Heart right ventricle (tissue), 16 donors: ENCODE measurements at regions of chr12 and their contacts with region 1.

Region 1: DNA sequence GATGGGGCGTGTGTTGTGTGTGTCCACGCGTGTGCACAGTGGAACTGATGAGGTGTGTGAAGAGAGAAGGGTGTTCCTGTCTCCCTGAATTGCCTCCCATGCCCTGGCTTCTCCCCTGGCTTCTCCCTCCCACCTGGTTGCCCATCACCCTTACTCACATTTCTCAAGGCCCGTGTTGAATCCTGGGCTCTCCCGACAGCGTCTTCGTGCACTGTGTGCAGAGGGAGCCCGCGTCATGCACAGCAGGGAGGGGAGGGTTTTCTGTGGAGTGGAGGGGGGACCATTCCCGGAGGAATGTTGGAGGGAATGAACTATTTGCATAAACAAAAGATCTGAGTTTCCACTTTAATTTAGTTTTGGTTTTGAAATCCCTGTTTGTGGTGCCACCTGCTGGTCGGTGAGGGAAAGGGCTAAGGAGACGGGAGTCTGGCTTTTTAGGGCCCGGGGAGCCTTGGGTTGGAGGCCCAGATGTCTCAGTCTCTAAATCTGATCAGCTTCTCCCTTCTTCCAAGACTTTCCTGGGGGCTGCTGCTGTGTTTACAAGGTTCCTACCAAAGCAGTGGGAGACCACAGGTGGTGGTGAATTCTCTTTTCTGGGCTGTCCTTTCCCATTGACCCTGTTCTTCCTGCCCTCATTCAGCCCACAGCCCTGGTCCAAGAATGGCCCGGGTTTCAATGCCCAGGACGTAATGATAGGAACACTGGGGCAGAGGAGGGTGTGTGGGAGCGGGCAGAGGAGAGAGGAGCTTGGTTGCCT is at the start of gene C1R:
- DNase-seq: peak; percentile 66 to 77
- ATAC-seq: peak; percentile 74 to 88 (median 84)
- H3K4me3 ChIP-seq: peak within 1 kb of the TSS; percentile 9 to 67 (median 58)
- H3K27ac ChIP-seq: peak within 1 kb of the TSS; percentile 46 to 84 (median 79)
- H3K4me1 ChIP-seq: peaks cover 0 to 26% (median 16%) of the 10 kb centered on the region in 9 donors
- H3K27me3 ChIP-seq: no peaks in the 10 kb centered on the region
- CTCF ChIP-seq: peak; percentile 83 to 94 (median 91)
- total RNA-seq, gene C1R: 19.9 to 238 (median 59.0) TPM

Region 2: GRCh38 chr12:6921996-6922946 is 170.1 kb before region 1 on chr12:
- intact Hi-C with region 1: loop called in 1 of 10 experiments (anchors 5 kb)
- DNase-seq: no peak
- ATAC-seq: no peak
- H3K4me3 ChIP-seq: no peak overlapping the region
- H3K27ac ChIP-seq: peak overlapping the region in 1 of 10 donors; percentile 31
- H3K4me1 ChIP-seq: peaks cover 17 to 48% (median 35%) of the 10 kb centered on the region in 9 donors
- H3K27me3 ChIP-seq: peaks cover 0 to 5% (median 0%) of the 10 kb centered on the region in 7 donors
- CTCF ChIP-seq: no peak

Region 3: DNA sequence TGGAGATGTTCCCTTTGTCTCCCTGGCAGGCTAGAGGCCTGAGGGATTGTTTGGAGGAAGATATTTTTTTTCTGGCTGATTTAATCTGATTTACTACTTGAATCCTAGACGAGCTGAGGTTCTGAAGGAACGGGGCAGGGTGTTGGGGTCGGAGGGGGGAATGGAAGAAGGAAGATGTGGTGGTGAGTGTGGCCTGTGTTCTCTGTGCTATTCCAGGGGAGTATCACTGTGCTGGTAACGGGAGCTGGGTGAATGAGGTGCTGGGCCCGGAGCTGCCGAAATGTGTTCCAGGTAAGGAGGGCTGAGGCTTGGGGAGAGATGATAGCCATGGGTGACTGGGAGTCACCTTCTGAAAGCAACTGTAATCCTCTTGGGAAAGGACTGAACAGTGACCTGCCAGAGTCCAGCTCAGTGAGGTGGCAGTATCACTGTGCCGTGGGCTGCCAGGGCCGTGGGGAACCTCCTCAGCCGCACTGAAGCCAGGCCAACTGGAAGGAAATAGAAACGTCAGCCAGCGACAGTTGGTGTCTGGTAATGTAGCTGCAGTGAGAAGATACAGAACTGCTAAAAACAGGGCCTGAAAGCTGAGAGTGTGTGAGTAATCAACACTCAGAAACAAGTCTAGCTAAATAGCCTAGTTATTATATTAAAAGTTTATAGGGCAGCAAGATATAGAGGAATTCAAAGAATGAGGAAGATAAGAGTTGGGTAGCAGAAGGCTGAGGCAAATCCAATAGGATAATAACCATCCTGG is 24.0 kb before region 1 on chr12:
- intact Hi-C with region 1: loop called in 2 of 10 experiments (anchors 2 to 5 kb)
- DNase-seq: peak; percentile 47 to 55
- ATAC-seq: peak; percentile 65 to 96 (median 90)
- H3K4me3 ChIP-seq: no peak overlapping the region
- H3K27ac ChIP-seq: peak overlapping the region in 8 of 10 donors; percentile 20 to 74 (median 49)
- H3K4me1 ChIP-seq: peaks cover 0 to 25% (median 18%) of the 10 kb centered on the region in 9 donors
- H3K27me3 ChIP-seq: no peaks in the 10 kb centered on the region
- CTCF ChIP-seq: no peak